Motor neuron (in vitro differentiated cells): ENCODE measurements at regions of chr5 and their contacts with region 1.

Region 1: DNA sequence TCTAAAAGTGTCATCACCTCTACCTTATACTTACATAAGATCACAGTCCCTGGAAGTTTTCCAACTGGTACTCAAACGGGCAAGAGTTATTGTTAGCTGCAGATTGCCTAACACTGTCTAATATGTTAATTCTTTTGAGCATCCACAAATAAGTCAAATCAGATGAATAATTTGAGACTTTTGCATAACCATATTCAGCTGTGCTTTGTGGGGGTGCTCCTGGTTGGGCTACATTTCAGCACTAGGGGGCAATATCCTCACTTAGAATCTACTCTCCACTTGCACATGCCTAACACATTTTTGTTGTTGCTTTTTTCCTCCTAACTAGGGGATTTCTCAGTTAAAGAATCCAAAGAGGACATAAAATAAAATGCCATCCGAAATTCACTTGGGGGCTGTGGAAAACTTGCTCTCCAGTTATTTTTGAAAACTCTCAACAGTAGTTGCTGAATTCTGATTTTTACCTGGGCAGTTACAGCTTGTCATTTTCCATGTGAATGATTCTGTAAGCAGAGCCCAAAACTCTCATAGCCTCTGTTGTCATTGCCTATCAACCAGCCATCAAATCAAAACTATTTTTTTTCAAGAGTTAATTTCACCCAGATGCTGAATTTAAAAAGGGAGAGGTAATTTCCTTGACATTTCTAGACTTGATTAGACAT is 71.5 kb downstream of the TRIM36 start:
- ATAC-seq: peak in 7 of 8 experiments; percentile 40 to 99 (median 79)
- H3K4me3 ChIP-seq: no peak overlapping the region
- H3K27ac ChIP-seq: no peak overlapping the region
- H3K4me1 ChIP-seq: no peaks in the 10 kb centered on the region

Region 2: DNA sequence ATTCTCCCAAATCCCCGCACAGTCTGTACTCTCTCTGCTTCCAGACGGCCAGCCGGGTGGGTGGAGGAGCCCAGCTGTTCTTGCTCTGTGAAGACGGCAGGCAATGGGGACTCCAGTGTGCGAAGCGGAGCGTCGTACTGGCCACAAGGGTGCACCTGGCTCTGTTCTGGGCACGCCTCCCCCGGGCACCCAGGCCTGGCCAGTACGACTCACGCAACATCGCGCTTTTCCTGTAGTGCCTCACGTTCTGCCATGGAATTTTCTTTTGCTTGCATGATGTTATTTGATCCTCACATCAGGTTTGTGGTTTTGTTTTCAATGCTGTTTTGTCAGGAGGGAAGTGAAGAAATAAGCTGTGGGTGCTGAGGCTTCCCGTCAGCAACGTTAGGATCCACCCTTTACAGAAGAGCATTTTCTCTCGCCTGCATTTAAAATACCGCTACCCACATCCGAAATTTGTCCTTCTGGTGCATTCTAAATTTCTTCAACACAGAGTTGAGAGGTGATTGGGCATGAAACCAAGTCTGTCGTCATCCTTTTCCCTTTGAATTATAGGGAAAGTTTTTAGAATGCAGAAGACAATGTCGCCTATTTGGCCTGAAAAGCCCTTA is 240.1 kb before region 1 on chr5:
- in situ Hi-C with region 1: no loop called
- ATAC-seq: peak in 3 of 8 experiments; percentile 83 to 95 (median 93)
- H3K4me3 ChIP-seq: no peak overlapping the region
- H3K27ac ChIP-seq: no peak overlapping the region
- H3K4me1 ChIP-seq: no peaks in the 10 kb centered on the region

Region 3: DNA sequence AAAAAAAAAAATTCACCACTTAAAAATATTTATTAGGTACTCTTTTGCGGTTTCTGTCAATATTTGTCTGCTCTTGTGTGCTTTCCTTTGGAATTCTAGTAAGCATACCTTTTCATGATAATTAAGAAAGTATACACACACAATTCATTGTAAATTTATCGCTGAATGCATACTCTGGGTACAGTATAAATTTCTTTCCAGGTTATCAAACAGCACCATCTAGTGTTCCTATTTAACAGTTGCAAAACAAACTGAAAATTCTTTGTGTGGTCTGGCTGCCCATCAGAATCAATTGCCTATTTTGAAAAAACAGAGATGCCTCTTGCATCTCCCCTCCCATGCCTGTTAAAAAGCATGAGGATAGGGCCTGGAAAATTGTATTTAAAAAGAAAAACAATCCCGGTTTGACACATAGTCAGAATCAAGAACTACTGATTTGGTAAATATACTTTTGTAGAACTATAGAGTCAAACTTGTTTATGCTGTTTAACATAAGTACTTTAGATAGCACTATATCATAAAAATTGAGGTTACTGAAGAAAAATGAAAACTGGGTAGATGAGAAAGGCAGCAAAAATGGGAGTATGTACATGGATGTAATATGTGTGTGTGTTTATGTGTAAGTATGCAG is 148.3 kb after region 1 on chr5:
- in situ Hi-C with region 1: loop called in 2 of 9 experiments (anchors 25 kb)
- ATAC-seq: peak in 7 of 8 experiments; percentile 36 to 84 (median 67)
- H3K4me3 ChIP-seq: no peak overlapping the region
- H3K27ac ChIP-seq: no peak overlapping the region
- H3K4me1 ChIP-seq: no peaks in the 10 kb centered on the region

Region 4: GRCh38 chr5:115586601-115587048 is 488.5 kb after region 1 on chr5:
- in situ Hi-C with region 1: loop called in 2 of 9 experiments (anchors 25 kb)
- ATAC-seq: peak in 4 of 8 experiments; percentile 19 to 76 (median 52)
- H3K4me3 ChIP-seq: no peak overlapping the region
- H3K27ac ChIP-seq: no peak overlapping the region
- H3K4me1 ChIP-seq: no peaks in the 10 kb centered on the region